Psoas muscle (tissue), 8 donors: ENCODE measurements at regions of chr20 and their contacts with region 1.

Region 1: DNA sequence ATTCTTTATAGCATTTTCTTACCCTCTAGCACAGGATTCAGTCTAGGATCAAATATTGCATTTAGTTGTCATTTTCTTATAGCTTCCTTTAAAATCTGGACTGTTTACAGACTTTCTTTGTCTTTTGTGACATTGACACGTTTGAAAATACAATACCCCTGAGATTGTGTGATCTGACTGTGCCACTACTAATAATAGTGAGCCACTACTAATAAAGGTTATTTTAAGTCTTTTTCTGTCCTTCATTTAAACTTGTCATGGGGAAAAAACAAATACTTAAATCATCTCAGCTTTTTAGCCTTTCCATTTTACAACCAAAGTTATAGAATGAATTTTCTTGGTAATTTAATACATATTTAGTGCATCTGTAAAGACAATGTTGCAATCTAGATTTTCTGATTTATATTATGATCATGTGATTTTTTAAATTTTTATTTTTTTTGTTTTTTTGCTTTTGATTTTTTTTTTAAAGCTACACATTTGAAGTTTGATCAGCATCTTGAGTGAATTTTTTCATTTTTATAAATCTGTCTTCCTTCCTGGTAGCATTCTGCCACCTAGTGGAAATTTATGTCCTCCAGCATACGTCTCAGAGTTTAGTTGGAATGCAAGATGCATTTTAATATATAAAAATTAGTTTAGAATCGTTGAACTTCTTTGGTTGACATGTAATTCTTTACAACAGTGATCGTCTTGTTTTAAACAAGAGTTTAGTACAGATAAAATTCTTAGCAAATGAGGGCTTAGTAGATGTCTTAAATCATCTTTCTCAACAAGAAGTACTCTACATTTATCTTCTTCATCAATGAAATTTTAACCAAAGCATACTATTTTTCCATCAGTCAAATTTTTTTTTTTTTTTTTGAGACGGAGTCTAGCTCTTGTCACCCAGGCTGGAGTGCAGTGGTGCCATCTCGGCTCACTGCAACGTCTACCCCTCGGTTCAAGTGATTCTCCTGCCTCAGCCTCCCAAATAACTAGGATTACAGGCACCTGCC is 119.4 kb downstream of the NCOA3 start:
- DNase-seq: no peak
- ATAC-seq: peak in 3 of 4 donors; percentile 53 to 64 (median 57)
- H3K4me3 ChIP-seq: no peak overlapping the region
- H3K27ac ChIP-seq: no peak overlapping the region
- H3K4me1 ChIP-seq: peaks cover 16% of the 10 kb centered on the region
- H3K27me3 ChIP-seq: no peaks in the 10 kb centered on the region
- CTCF ChIP-seq: peak; percentile 91

Region 2: DNA sequence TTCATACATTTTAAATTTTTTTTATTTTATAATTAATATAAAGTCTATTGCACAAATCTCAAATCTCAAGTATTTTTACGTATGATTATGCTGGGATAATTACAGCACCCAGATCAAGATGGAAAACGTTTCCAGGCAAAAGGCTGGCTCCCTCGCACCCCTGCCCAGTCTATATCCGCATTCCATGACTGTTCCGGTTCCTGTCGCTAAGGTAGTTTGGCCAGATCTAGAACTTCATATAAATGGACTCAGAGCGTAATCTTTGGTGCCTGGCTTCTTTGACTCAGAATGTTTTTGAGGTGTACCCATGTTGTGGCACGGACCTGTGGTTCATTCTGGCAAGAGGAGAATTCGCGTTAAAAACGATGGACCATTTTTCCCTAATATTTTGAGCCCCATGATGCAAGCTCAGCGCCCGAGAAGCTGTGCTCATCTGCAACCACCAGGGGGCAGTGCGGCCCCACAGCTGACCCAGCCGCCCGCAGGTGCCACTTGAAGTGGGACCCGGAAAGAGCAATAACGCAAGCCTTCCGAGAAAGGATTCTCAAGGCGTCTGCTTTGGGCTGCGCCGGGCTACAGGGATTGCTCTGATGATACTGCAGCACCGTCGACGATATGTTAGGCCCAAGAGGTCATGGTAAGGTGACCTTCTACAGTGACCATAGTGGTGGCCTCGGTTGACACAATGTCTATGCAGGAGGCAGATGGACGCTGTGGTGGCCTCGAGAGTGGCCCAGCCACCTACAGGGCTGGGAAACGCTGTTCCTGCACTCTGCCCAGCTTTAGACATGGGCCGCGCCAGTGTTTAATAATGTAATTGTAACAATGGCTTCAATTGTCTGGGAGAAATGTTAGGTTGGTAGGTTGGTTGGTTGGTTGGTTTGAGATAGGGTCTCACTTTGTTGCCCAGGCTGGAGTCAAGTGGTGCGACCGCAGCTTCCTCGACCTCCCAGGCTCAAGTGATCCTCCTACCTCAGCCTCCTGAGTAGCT is 424.7 kb before region 1 on chr20:
- intact Hi-C with region 1: loop called (anchors 5 to 10 kb)
- DNase-seq: peak; percentile 70 to 77
- ATAC-seq: peak; percentile 68 to 89 (median 80)
- H3K4me3 ChIP-seq: no peak overlapping the region
- H3K27ac ChIP-seq: no peak overlapping the region
- H3K4me1 ChIP-seq: no peaks in the 10 kb centered on the region
- H3K27me3 ChIP-seq: peaks cover 0 to 2% (median 0%) of the 10 kb centered on the region in 3 donors
- CTCF ChIP-seq: peak; percentile 93

Region 3: DNA sequence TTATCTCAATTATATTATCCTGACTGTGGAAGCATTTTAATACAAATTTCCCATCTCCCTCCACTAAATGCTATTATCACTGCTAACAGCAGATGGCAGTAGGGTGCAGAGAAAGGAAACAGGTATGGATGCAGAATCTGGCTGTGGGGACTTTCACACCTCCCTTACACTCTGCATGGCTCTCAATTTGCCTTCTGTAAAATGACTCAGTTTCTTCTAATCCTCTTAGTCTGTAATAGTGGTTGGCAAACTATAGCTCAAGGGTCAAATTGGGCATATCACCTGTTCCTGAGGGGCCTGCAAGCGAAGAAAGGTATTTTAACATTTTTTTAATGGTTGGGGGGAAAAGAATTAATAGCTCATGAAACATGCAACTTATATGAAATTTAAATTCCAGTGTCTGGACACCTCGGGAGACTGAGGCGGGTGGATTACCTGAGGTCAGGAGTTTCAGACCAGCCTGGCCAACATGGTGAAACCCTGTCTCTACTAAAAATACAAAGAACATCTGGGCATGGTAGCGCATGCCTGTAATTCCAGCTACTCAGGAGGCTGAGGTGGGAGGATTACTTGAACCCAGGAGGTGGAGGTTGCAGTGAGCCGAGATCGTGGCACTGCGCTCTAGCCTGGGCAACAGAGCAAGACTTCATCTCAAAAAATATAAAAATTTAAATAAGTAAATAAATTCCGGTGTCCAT is 348.1 kb before region 1 on chr20:
- intact Hi-C with region 1: loop called (anchors 2 to 5 kb)
- DNase-seq: no peak
- ATAC-seq: peak; percentile 62 to 85 (median 78)
- H3K4me3 ChIP-seq: no peak overlapping the region
- H3K27ac ChIP-seq: peak overlapping the region; percentile 38
- H3K4me1 ChIP-seq: peaks cover 34% of the 10 kb centered on the region
- H3K27me3 ChIP-seq: no peaks in the 10 kb centered on the region
- CTCF ChIP-seq: peak; percentile 90

Region 4: GRCh38 chr20:47379433-47380150 is 241.5 kb before region 1 on chr20:
- intact Hi-C with region 1: loop called (anchors 5 to 10 kb)
- DNase-seq: no peak
- ATAC-seq: no peak
- H3K4me3 ChIP-seq: no peak overlapping the region
- H3K27ac ChIP-seq: no peak overlapping the region
- H3K4me1 ChIP-seq: peaks cover 11% of the 10 kb centered on the region
- H3K27me3 ChIP-seq: no peaks in the 10 kb centered on the region
- CTCF ChIP-seq: no peak

Region 5: DNA sequence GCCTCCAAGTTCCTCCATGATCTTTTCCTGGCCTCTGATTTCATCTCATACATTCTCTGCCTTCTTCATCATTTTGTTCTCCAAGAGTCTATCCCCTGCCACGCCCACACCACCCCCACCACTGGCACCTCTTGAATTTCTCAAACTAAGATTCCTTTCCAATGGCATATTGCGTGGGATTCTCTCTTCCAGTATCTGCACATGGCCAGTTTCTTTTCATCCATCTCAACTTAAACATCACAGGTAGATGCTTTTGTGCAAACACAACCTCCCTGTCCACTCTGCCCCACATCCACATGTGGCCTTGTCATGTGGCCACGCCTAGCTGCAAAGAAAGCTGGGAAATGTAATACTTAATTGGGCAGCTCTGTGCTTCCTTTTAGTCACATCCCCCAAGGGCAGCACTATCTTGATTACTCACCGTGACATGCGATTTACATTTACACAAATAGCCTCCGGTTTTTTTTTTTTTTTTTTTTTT is 231.2 kb before region 1 on chr20:
- intact Hi-C with region 1: loop called in 1 of 2 experiments (anchors 10 kb)
- DNase-seq: no peak
- ATAC-seq: peak in 2 of 4 donors; percentile 50 to 64
- H3K4me3 ChIP-seq: no peak overlapping the region
- H3K27ac ChIP-seq: no peak overlapping the region
- H3K4me1 ChIP-seq: peaks cover 5% of the 10 kb centered on the region
- H3K27me3 ChIP-seq: no peaks in the 10 kb centered on the region
- CTCF ChIP-seq: no peak

Region 6: DNA sequence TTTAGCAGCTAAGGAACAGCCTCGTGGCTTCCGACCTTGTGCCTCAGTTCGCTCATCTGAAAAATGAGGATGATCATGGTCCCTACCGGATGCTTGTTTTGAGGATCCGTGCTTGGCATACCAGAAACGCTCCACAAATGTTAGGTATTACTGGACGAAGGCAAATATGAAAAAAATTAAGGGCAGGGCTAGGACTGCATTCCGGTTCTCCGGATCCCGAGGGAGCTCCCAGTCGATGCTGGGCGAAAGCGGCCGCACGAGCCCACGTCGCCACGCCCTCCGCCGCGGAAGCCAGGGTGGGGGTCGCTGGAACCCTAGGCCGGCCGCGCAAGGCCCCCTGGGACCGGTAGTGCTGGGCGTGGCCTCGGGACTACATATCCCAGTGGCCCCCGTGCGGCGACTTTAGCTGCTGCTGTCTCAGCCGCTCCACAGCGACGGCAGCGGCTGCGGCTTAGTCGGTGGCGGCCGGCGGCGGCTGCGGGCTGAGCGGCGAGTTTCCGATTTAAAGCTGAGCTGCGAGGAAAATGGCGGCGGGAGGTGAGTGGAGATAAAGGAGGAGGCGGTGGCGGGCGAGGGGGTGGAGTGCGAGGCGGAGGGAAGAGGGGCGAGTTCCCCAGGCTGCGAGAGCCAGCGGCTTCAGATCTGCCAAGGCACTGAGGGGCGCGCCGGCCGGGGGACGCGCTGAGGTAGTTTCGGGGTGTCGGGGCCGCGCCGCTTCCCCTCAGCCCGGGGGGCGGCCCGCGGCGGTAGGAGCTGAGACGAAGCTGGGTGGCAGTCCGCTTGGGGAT is 119.4 kb before region 1 on chr20 and contains the start of gene NCOA3:
- intact Hi-C with region 1: loop called (anchors 5 kb)
- DNase-seq: peak; percentile 94 to 96
- ATAC-seq: peak; percentile 97 to 99 (median 98)
- H3K4me3 ChIP-seq: peak within 1 kb of the TSS; percentile 98
- H3K27ac ChIP-seq: peak within 1 kb of the TSS; percentile 89
- H3K4me1 ChIP-seq: peaks cover 30% of the 10 kb centered on the region
- H3K27me3 ChIP-seq: no peaks in the 10 kb centered on the region
- CTCF ChIP-seq: peak; percentile 56
- total RNA-seq, gene NCOA3: 13.0 to 56.9 (median 23.3) TPM